Mammary epithelial cell (primary cell): ENCODE measurements at regions of chr17 and their contacts with region 1.

Region 1: DNA sequence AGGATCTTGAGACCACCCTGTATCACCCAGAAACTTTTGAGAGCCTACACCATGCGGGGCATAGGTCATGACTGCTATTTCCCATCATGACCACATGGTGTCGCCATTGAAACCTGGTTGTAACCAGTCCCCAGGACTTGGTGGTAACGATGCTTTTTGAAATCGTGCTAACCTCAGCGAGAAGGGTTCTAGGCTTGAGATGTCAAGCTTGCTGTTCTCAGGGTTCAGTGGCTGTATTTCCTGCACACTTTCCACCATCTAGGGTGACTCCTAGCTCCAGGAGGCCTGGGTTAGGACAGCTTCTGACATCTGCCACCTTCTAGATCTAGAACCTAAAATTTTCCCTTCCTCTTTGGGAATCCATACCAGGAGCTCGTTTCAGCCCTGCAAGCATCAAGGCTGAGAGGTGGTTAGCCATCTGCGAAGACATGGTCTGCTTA is 13.0 kb upstream of the SPNS3 start:
- DNase-seq: peak; percentile 50
- H3K4me3 ChIP-seq: no peak overlapping the region
- H3K27ac ChIP-seq: no peak overlapping the region
- H3K4me1 ChIP-seq: no peaks in the 10 kb centered on the region
- H3K27me3 ChIP-seq: no peaks in the 10 kb centered on the region
- CTCF ChIP-seq: peak; percentile 86 to 88

Region 2: DNA sequence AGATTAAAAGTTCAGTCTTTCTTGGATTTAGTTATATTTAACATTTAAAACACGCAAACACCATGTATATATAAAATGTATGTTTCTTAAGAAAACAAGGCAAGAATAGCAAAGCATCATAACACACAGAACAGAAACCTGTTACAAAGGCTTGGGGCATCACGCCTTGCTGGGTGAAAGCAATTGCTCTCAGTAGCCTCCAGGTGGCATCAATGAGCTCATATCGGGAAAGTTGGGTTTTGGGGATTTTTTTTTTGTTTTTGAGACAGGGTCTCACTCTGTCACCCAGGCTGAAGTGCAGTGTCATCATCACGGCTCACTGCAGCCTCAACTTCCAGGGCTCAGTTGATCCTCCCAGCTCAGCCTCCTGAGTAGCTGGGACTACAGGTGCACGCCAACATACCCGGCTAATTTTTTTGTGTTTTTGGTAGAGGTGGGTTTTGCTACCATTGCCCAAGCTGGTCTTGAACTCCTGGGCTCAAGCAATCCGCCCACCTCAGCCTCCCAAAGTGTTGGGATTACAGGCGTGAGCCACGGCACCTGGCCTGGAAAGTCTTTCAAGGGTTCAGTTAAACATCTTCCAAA is 220.8 kb before region 1 on chr17:
- CTCF ChIA-PET with region 1: interaction called, 4 read pairs
- dilution Hi-C with region 1: loop called (anchors 5 kb)
- in situ Hi-C with region 1: loop called in 1 of 2 experiments (anchors 10 kb)
- intact Hi-C with region 1: no loop called
- DNase-seq: peak; percentile 13
- H3K4me3 ChIP-seq: no peak overlapping the region
- H3K27ac ChIP-seq: no peak overlapping the region
- H3K4me1 ChIP-seq: no peaks in the 10 kb centered on the region
- H3K27me3 ChIP-seq: no peaks in the 10 kb centered on the region
- CTCF ChIP-seq: peak; percentile 78 to 80

Region 3: GRCh38 chr17:4340914-4341615 is 79.6 kb before region 1 on chr17:
- CTCF ChIA-PET with region 1: no interaction called
- dilution Hi-C with region 1: loop called (anchors 5 kb)
- in situ Hi-C with region 1: no loop called
- intact Hi-C with region 1: no loop called
- DNase-seq: no peak
- H3K4me3 ChIP-seq: no peak overlapping the region
- H3K27ac ChIP-seq: no peak overlapping the region
- H3K4me1 ChIP-seq: peaks cover 3% of the 10 kb centered on the region
- H3K27me3 ChIP-seq: no peaks in the 10 kb centered on the region
- CTCF ChIP-seq: no peak

Region 4: DNA sequence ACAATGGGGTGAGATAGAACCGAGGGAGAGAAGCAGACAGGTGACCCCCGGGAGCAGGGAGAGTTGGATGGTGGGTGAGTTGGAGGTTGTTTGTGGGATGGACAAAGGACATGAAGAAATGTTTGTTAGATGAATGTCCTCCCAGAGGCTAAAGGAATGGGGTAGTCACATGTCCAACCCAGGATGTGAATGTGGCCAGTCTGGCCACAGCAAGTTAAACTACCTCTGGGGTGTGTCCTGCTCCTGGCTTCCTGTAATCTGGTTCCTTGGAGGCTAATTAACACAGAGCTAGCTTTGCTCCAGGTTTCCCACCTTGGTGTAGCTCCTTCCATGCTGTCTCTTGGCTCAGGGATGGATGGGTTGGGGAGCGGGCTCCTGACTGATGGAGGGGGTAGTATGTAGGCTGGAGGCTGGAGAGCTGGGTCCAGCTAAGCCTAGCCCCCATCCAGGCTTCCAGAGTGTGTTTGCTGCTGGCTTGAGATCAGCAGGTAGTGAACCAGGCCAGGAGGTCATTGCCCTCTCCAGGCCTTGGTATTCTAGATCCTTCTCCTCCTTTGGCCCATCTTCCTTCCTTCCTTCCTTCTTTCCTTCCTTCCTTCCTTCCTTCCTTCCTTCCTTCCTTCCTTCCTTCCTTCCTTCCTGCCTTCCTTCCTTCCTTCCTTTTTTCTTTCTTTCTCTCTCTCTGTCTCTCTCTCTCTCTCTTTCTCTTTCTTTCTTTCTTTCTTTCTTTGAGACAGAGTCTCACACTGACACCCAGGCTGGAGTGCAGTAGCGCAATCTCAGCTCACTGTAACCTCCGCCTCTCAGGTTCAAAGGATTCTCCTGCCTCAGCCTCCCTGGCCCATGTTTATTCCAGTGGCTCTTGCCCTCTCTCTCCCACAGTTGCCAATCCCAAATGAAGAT is 26.3 kb before region 1 on chr17:
- CTCF ChIA-PET with region 1: no interaction called
- dilution Hi-C with region 1: no loop called
- in situ Hi-C with region 1: no loop called
- intact Hi-C with region 1: no loop called
- DNase-seq: peak; percentile 90
- H3K4me3 ChIP-seq: peak overlapping the region; percentile 7 to 32 (median 20)
- H3K27ac ChIP-seq: peak overlapping the region; percentile 80
- H3K4me1 ChIP-seq: peaks cover 32% of the 10 kb centered on the region
- H3K27me3 ChIP-seq: no peaks in the 10 kb centered on the region
- CTCF ChIP-seq: no peak

Region 5: DNA sequence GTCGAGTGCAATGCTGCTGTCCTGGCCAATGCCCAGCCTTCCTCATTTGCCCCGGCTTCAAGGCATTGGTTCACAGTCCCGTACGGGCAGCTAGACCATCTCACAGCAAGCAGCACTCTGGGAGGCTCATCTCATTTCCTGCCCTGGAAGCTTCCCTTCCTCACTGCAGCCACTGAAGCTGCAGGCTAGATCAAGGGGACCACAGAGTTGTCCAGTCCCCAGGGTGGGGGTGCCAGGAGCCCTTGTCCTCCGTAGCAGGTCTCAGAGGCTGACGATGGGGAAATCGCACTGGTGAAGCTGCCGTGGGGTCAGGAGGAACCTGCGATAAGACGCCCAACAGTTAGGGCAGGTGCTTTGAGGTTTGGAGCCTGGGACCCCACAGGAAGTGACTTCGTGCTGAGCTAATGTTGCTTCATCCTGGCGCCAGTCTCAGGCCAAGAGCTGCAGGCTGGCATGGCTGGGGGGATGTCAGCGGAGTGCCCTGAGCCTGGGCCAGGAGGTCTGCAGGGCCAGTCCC is 12.9 kb after region 1 on chr17 and contains the start of gene SPNS3:
- CTCF ChIA-PET with region 1: no interaction called
- dilution Hi-C with region 1: no loop called
- in situ Hi-C with region 1: no loop called
- intact Hi-C with region 1: no loop called
- DNase-seq: no peak
- H3K4me3 ChIP-seq: no peak within 1 kb of the TSS
- H3K27ac ChIP-seq: no peak within 1 kb of the TSS
- H3K4me1 ChIP-seq: no peaks in the 10 kb centered on the region
- H3K27me3 ChIP-seq: no peaks in the 10 kb centered on the region
- CTCF ChIP-seq: no peak
- total RNA-seq, gene SPNS3: not detected

Region 6: DNA sequence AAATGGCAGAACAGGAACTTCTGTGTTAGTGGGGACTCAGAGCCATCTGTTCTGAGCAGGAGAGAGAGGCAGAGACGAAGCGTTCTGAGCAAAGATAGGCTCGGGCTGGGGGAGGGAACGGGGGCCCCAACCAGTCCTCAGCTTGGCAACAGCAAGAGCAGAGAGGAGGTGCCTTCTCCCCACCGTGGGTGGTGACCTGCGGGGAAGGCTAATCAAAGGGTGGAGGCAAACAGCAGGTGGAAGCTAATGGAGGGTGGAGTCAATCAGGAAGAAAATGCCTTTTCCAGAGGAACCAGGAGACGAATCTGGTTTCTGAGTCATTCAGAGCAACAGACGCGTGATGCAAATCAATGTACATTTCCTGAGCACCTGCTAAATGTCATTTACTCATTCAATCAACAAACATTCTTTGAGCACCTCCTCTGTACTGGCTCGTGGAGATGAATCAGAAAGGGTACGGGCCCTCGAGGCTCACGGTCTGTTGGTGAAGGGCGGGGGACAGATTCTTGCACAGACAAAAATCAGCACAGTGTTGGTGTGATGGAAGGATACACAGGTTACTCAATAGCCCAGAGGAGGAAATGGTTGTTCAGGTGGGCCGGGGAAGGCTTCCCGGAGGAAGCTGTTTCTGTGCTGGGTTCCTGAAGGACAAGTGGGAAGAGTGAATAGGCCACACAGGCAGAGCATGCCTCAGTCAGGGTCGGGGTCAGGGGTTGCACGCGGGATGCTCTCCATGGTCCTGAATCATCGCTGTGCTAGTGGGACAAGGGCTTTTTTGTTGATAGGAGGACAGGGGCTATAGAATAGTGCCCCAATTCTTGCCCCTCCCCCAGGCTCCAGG is 72.2 kb after region 1 on chr17:
- CTCF ChIA-PET with region 1: no interaction called
- dilution Hi-C with region 1: loop called (anchors 5 kb)
- in situ Hi-C with region 1: no loop called
- intact Hi-C with region 1: no loop called
- DNase-seq: peak; percentile 32
- H3K4me3 ChIP-seq: no peak overlapping the region
- H3K27ac ChIP-seq: no peak overlapping the region
- H3K4me1 ChIP-seq: peaks cover 6% of the 10 kb centered on the region
- H3K27me3 ChIP-seq: peaks cover 3% of the 10 kb centered on the region
- CTCF ChIP-seq: no peak

Region 7: GRCh38 chr17:4534026-4534914 is 113.6 kb after region 1 on chr17:
- CTCF ChIA-PET with region 1: no interaction called
- dilution Hi-C with region 1: no loop called
- in situ Hi-C with region 1: no loop called
- intact Hi-C with region 1: loop called (anchors 2 kb)
- DNase-seq: no peak
- H3K4me3 ChIP-seq: no peak overlapping the region
- H3K27ac ChIP-seq: no peak overlapping the region
- H3K4me1 ChIP-seq: peaks cover 5% of the 10 kb centered on the region
- H3K27me3 ChIP-seq: no peaks in the 10 kb centered on the region
- CTCF ChIP-seq: no peak

Region 8: GRCh38 chr17:4565209-4566141 is 144.8 kb after region 1 on chr17:
- CTCF ChIA-PET with region 1: interaction called, 7 read pairs
- dilution Hi-C with region 1: no loop called
- in situ Hi-C with region 1: no loop called
- intact Hi-C with region 1: loop called (anchors 1 kb)
- DNase-seq: peak; percentile 61
- H3K4me3 ChIP-seq: no peak overlapping the region
- H3K27ac ChIP-seq: no peak overlapping the region
- H3K4me1 ChIP-seq: peaks cover 17% of the 10 kb centered on the region
- H3K27me3 ChIP-seq: no peaks in the 10 kb centered on the region
- CTCF ChIP-seq: peak; percentile 90 to 92

Region 9: GRCh38 chr17:4658478-4659305 is 238.0 kb after region 1 on chr17:
- CTCF ChIA-PET with region 1: no interaction called
- dilution Hi-C with region 1: loop called (anchors 5 kb)
- in situ Hi-C with region 1: no loop called
- intact Hi-C with region 1: no loop called
- DNase-seq: peak; percentile 56
- H3K4me3 ChIP-seq: no peak overlapping the region
- H3K27ac ChIP-seq: no peak overlapping the region
- H3K4me1 ChIP-seq: no peaks in the 10 kb centered on the region
- H3K27me3 ChIP-seq: no peaks in the 10 kb centered on the region
- CTCF ChIP-seq: no peak